T-cell (primary cell): ENCODE measurements at regions of chr10 and their contacts with region 1.

Region 1: DNA sequence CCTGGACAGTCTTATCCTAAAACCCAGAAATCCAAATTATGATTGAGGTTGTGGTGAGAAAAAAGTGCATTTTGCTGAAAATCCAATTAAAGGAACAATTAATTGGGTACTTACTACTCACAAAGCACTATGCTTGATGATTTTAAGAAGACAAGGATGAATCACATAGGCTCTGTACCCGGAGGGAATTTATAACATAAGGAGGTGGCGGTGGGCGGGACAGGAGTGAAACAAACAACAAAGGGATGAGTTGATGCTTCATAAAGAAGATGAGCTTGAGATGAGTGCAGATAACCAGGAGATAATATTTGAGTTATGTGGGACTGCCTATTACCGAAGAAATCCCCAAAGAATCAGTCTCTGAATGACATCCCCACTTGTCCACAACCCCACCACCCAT is 171.1 kb upstream of the FZD8 start:
- DNase-seq: no peak
- ATAC-seq: no peak
- H3K4me3 ChIP-seq: no peak overlapping the region
- H3K4me3 Mint-ChIP-seq: no peak overlapping the region
- H3K27ac ChIP-seq: no peak overlapping the region
- H3K27ac Mint-ChIP-seq: no peak overlapping the region
- H3K4me1 ChIP-seq: no peaks in the 10 kb centered on the region
- H3K4me1 Mint-ChIP-seq: no peaks in the 10 kb centered on the region
- H3K27me3 ChIP-seq: no peaks in the 10 kb centered on the region
- H3K27me3 Mint-ChIP-seq: no peaks in the 10 kb centered on the region

Region 2: GRCh38 chr10:34866848-34867247 is 946.4 kb before region 1 on chr10:
- CTCF ChIA-PET with region 1: interaction called in 1 of 2 experiments, 10 read pairs
- POLR2A ChIA-PET with region 1: no interaction called
- DNase-seq: no peak
- ATAC-seq: no peak
- H3K4me3 ChIP-seq: no peak overlapping the region
- H3K4me3 Mint-ChIP-seq: no peak overlapping the region
- H3K27ac ChIP-seq: no peak overlapping the region
- H3K27ac Mint-ChIP-seq: no peak overlapping the region
- H3K4me1 ChIP-seq: peaks cover 0 to 4% of the 10 kb centered on the region in 2 experiments
- H3K4me1 Mint-ChIP-seq: peaks cover 0 to 11% (median 6%) of the 10 kb centered on the region in 3 donors
- H3K27me3 ChIP-seq: peaks cover 0 to 9% of the 10 kb centered on the region in 2 experiments
- H3K27me3 Mint-ChIP-seq: peaks cover 9 to 14% of the 10 kb centered on the region in 2 donors